Activated T-helper 1 cell treated with anti-CD3 and anti-CD28 coated beads, Interleukin-12 subunit alpha, Interleukin-12 subunit beta, Interleukin-2, Interleukin-4 antibody, amounts not matched to agents 30 ng/mL and 10 ng/mL and 1 ng/mL, durations not matched to agents 14 hours and 24 hours and 36 hours (primary cell): ENCODE measurements at regions of chr3 and their contacts with region 1.

Region 1: GRCh38 chr3:97871801-97872524 is 50.2 kb downstream of the CRYBG3 start:
- DNase-seq: peak; percentile 32
- H3K4me3 Mint-ChIP-seq: peak overlapping the region; percentile 59
- H3K27ac Mint-ChIP-seq: peak overlapping the region; percentile 88
- H3K4me1 Mint-ChIP-seq: peaks cover 27% of the 10 kb centered on the region
- H3K27me3 Mint-ChIP-seq: peaks cover 2% of the 10 kb centered on the region

Region 2: GRCh38 chr3:97764407-97765238 is 107.3 kb before region 1 on chr3 and contains the start of gene ARL6:
- intact Hi-C with region 1: no loop called
- DNase-seq: peak; percentile 66
- H3K4me3 Mint-ChIP-seq: peak within 1 kb of the TSS; percentile 96
- H3K27ac Mint-ChIP-seq: peak within 1 kb of the TSS; percentile 95
- H3K4me1 Mint-ChIP-seq: peaks cover 31% of the 10 kb centered on the region
- H3K27me3 Mint-ChIP-seq: peaks cover 3% of the 10 kb centered on the region
- total RNA-seq, gene ARL6: 5.9 and 6.2 TPM in 2 replicates

Region 3: GRCh38 chr3:97821810-97822775 is 49.9 kb before region 1 on chr3 and contains the start of gene CRYBG3:
- intact Hi-C with region 1: loop called (anchors 1 kb)
- DNase-seq: peak; percentile 86
- H3K4me3 Mint-ChIP-seq: peak within 1 kb of the TSS; percentile 99
- H3K27ac Mint-ChIP-seq: peak within 1 kb of the TSS; percentile 92
- H3K4me1 Mint-ChIP-seq: peaks cover 40% of the 10 kb centered on the region
- H3K27me3 Mint-ChIP-seq: peaks cover 34% of the 10 kb centered on the region
- total RNA-seq, gene CRYBG3: 6.5 and 6.8 TPM in 2 replicates

Region 4: GRCh38 chr3:97910931-97911351 is 39.0 kb after region 1 on chr3:
- intact Hi-C with region 1: loop called (anchors 2 kb)
- DNase-seq: peak; percentile 7
- H3K4me3 Mint-ChIP-seq: peak overlapping the region; percentile 78
- H3K27ac Mint-ChIP-seq: peak overlapping the region; percentile 61
- H3K4me1 Mint-ChIP-seq: peaks cover 21% of the 10 kb centered on the region
- H3K27me3 Mint-ChIP-seq: no peaks in the 10 kb centered on the region

Region 5: GRCh38 chr3:98022978-98023820 is 151.2 kb after region 1 on chr3:
- intact Hi-C with region 1: loop called (anchors 1 kb)
- DNase-seq: peak; percentile 80
- H3K4me3 Mint-ChIP-seq: no peak overlapping the region
- H3K27ac Mint-ChIP-seq: no peak overlapping the region
- H3K4me1 Mint-ChIP-seq: peaks cover 24% of the 10 kb centered on the region
- H3K27me3 Mint-ChIP-seq: no peaks in the 10 kb centered on the region

Region 6: GRCh38 chr3:98136631-98137030 is 264.7 kb after region 1 on chr3:
- intact Hi-C with region 1: no loop called
- DNase-seq: no peak
- H3K4me3 Mint-ChIP-seq: no peak overlapping the region
- H3K27ac Mint-ChIP-seq: no peak overlapping the region
- H3K4me1 Mint-ChIP-seq: no peaks in the 10 kb centered on the region
- H3K27me3 Mint-ChIP-seq: peaks cover 5% of the 10 kb centered on the region

Region 7: GRCh38 chr3:98893740-98894139 is 1021.8 kb after region 1 on chr3:
- intact Hi-C with region 1: no loop called
- DNase-seq: no peak
- H3K4me3 Mint-ChIP-seq: no peak overlapping the region
- H3K27ac Mint-ChIP-seq: no peak overlapping the region
- H3K4me1 Mint-ChIP-seq: no peaks in the 10 kb centered on the region
- H3K27me3 Mint-ChIP-seq: peaks cover 5% of the 10 kb centered on the region